ENCODE measurements at regions of chr4 and their contacts with region 1.

Region 1: GRCh38 chr4:142405021-142405694 is 440.9 kb downstream of the INPP4B start:
- DNase-seq: peak; percentile 68
- ATAC-seq: peak; percentile 44
- H3K4me3 ChIP-seq: peak overlapping the region; percentile 58
- H3K27ac ChIP-seq: peak overlapping the region; percentile 94
- H3K4me1 ChIP-seq: peaks cover 12% of the 10 kb centered on the region
- H3K27me3 ChIP-seq: no peaks in the 10 kb centered on the region
- CTCF ChIP-seq: no peak
- POLR2A ChIP-seq: no peak
- RAD21 ChIP-seq: no peak

Region 2: DNA sequence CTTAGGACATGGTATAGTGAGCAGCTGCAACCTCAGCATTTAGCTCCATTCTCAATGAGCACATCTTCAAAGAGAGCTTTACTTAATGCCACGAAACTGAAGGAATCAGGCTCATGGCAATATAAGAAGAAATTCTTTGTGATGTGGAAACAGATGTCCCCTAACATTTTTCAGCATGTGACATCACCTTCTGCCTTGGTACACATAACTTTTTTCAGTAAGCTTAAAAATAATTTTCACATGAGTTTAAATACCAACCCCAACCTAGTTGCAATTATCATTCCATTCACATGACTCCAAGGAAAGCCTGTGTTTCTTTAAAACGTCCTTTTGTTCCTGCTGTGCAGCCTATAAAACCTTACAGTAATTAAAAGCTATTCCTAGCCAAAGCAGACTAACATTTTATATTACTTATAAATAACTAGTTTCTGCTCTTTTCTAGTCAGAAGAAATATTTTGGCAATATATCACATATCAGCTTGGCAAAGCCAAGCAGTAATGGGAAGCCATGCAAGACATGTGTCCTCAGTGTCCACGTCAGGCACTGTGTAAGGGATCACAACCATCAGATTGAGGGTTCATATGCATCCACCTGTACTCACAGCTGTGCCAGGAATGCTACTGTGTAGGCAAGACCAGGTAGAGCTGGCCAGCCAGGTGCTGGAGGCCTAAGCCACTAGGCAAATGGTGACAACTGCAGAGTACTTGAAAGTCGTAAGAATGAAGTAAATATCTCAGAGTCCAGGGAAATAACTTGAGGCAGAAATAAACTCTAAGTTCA is 25.7 kb before region 1 on chr4:
- CTCF ChIA-PET with region 1: no interaction called
- POLR2A ChIA-PET with region 1: no interaction called
- dilution Hi-C with region 1: no loop called
- in situ Hi-C with region 1: no loop called
- intact Hi-C with region 1: loop called (anchors 2 kb)
- DNase-seq: peak; percentile 90
- ATAC-seq: peak; percentile 87
- H3K4me3 ChIP-seq: no peak overlapping the region
- H3K27ac ChIP-seq: peak overlapping the region; percentile 98
- H3K4me1 ChIP-seq: peaks cover 9% of the 10 kb centered on the region
- H3K27me3 ChIP-seq: no peaks in the 10 kb centered on the region
- CTCF ChIP-seq: no peak
- POLR2A ChIP-seq: no peak
- RAD21 ChIP-seq: no peak

Region 3: GRCh38 chr4:142443469-142443868 is 38.3 kb after region 1 on chr4:
- CTCF ChIA-PET with region 1: no interaction called
- POLR2A ChIA-PET with region 1: no interaction called
- dilution Hi-C with region 1: no loop called
- in situ Hi-C with region 1: no loop called
- intact Hi-C with region 1: no loop called
- DNase-seq: no peak
- ATAC-seq: no peak
- H3K4me3 ChIP-seq: no peak overlapping the region
- H3K27ac ChIP-seq: no peak overlapping the region
- H3K4me1 ChIP-seq: no peaks in the 10 kb centered on the region
- H3K27me3 ChIP-seq: no peaks in the 10 kb centered on the region
- CTCF ChIP-seq: no peak
- POLR2A ChIP-seq: no peak
- RAD21 ChIP-seq: no peak

Region 4: DNA sequence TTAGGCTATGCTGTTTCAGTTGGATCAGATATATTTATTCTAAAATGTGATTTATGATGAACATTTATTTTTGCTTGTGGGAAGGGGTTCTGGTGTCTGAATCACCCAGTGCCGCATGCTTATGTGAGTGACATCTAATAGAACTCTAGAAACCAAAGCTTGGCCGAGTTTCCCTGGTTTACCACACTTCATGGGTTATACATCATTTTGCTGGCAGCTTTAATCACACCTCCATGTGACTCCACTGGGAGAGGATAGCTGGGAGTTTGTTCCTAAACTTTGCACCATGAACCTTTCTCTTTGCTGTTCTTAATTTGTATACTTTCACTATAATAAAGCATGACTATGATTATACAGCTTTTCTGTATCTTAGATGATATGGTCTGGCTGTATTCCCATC is 58.0 kb after region 1 on chr4:
- CTCF ChIA-PET with region 1: no interaction called
- POLR2A ChIA-PET with region 1: no interaction called
- dilution Hi-C with region 1: no loop called
- in situ Hi-C with region 1: no loop called
- intact Hi-C with region 1: no loop called
- DNase-seq: no peak
- ATAC-seq: no peak
- H3K4me3 ChIP-seq: no peak overlapping the region
- H3K27ac ChIP-seq: no peak overlapping the region
- H3K4me1 ChIP-seq: no peaks in the 10 kb centered on the region; the same call in 1 of the 2 replicates
- H3K27me3 ChIP-seq: no peaks in the 10 kb centered on the region
- CTCF ChIP-seq: no peak
- POLR2A ChIP-seq: no peak
- RAD21 ChIP-seq: no peak

Region 5: GRCh38 chr4:142861351-142861750 is 456.2 kb after region 1 on chr4:
- CTCF ChIA-PET with region 1: no interaction called
- POLR2A ChIA-PET with region 1: interaction called, 11 read pairs
- dilution Hi-C with region 1: no loop called
- in situ Hi-C with region 1: no loop called
- intact Hi-C with region 1: no loop called
- DNase-seq: no peak
- ATAC-seq: no peak
- H3K4me3 ChIP-seq: no peak overlapping the region
- H3K27ac ChIP-seq: no peak overlapping the region
- H3K4me1 ChIP-seq: no peaks in the 10 kb centered on the region
- H3K27me3 ChIP-seq: no peaks in the 10 kb centered on the region
- CTCF ChIP-seq: no peak
- POLR2A ChIP-seq: no peak
- RAD21 ChIP-seq: no peak